PC-9 (cell line): ENCODE measurements at regions of chr12 and their contacts with region 1.

Region 1: DNA sequence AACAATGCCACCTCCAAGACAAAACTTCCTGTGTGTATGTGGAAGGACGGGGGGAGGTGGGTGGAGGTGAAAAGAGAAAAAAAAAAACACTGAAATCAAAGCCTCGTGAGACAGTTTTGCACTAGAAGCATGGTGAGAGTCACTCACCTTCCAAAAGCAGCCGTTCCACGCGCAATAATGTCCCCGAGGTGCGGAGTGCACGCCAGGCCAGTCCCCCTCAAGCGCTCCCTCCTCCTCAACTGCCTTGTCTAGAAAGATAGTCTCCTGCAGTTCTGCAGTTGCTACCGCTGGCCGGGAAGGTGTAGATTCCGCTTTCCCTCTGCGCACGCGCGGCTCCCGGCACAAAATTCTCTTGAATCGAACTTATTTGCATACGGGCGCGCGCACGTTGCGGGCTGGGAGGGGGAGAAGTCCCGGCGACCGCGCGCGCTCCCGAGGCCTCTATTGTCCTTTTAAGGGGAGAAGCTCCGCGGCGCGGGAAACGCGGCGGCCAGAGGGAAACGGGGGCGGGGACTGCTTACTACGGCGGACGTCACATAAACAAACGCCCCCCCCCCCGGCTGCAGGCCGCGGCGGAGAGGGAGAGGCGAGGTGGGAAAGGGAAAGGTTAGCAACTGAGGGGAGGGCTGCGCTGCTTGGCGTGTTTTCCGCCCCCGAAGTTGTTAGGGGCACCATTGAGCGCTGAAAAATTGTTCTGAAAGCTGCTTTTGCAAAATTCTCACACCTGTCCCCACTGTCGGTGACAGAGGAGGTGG is at the start of gene SINHCAF:
- DNase-seq: peak; percentile 97 to 100
- H3K4me3 ChIP-seq: peak within 1 kb of the TSS; percentile 91
- H3K27ac ChIP-seq: peak within 1 kb of the TSS; percentile 84
- H3K4me1 ChIP-seq: peaks cover 25% of the 10 kb centered on the region
- H3K27me3 ChIP-seq: no peaks in the 10 kb centered on the region
- CTCF ChIP-seq: no peak
- total RNA-seq, gene SINHCAF: 146 and 152 TPM in 2 replicates

Region 2: DNA sequence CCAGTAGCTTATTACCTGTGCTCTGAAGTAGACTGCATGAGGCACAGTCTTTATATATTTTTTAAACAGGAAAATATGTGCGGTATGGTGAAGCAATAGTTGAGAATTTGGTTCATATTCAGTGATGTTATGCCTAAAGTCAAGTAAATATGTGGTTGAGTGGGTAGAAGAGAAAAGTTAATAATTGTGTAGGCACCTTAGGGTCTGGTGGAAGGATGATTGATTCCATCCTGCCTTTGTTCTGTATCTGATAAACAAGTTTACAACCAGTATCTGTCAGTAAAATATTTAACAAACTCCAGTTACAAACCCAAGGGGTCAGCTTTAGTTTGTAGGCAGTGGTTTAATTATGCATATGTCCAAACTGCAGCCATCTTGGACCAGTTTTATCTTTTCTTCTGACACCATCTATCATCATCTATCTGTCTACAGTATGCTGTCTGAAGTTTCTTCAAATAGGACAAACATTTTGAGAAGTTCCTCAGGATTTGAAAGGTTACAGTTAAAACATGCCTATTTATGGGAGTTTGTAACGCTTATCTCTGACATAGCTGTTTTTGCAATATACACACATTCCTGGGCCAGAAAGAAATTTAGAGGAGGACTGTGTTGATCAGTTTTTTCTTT is 10.9 kb before region 1 on chr12:
- CTCF ChIA-PET with region 1: no interaction called
- POLR2A ChIA-PET with region 1: interaction called, 10 read pairs
- intact Hi-C with region 1: no loop called
- DNase-seq: no peak
- H3K4me3 ChIP-seq: no peak overlapping the region
- H3K27ac ChIP-seq: no peak overlapping the region
- H3K4me1 ChIP-seq: peaks cover 51% of the 10 kb centered on the region
- H3K27me3 ChIP-seq: no peaks in the 10 kb centered on the region
- CTCF ChIP-seq: no peak

Region 3: DNA sequence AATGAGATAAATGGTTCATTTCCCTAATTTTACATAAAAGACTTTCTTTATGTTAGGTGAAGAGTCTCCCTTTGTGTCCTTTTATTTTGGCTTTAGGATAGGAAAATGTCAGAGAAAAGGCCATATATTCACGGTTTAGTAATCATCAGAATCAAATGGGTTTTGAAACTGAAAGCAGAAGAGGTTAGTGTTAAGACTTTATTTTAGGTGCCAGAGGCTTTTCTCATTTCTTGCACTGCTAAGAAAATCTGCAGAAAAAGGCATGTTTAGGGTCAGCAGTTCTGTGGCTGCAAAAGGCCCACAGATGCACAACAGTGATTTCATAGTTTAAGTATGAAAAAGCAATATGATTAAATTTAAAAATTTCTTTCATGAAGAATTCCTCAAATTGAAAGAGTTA is 80.3 kb after region 1 on chr12:
- CTCF ChIA-PET with region 1: no interaction called
- POLR2A ChIA-PET with region 1: no interaction called
- intact Hi-C with region 1: loop called (anchors 1 kb)
- DNase-seq: no peak
- H3K4me3 ChIP-seq: no peak overlapping the region
- H3K27ac ChIP-seq: no peak overlapping the region
- H3K4me1 ChIP-seq: no peaks in the 10 kb centered on the region
- H3K27me3 ChIP-seq: no peaks in the 10 kb centered on the region
- CTCF ChIP-seq: no peak

Region 4: DNA sequence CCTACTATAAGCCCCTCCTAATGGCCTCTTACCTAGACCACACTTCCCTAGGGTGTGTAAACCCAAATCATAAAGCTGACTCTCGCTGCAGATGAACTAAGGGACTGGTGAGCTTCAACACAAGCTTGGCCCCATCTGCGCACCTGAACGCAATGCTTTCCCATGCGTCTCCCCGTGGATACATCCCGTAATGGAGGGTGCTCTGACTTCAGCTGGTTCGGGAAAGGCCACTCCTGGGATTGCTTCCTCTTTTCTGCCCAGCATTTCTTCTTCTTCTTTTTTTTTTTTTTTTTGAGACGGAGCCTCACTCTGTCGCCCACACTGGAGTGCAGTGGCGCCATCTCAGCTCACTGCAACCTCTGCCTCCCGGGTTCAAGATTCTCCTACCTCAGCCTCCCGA is 305.7 kb after region 1 on chr12:
- CTCF ChIA-PET with region 1: no interaction called
- POLR2A ChIA-PET with region 1: interaction called, 8 read pairs
- intact Hi-C with region 1: loop called (anchors 1 kb)
- DNase-seq: no peak
- H3K4me3 ChIP-seq: no peak overlapping the region
- H3K27ac ChIP-seq: no peak overlapping the region
- H3K4me1 ChIP-seq: no peaks in the 10 kb centered on the region
- H3K27me3 ChIP-seq: no peaks in the 10 kb centered on the region
- CTCF ChIP-seq: no peak

Region 5: GRCh38 chr12:32365473-32366064 is 1039.5 kb after region 1 on chr12:
- CTCF ChIA-PET with region 1: interaction called, 3 read pairs
- POLR2A ChIA-PET with region 1: interaction called, 11 read pairs
- intact Hi-C with region 1: no loop called
- DNase-seq: peak; percentile 70 to 72
- H3K4me3 ChIP-seq: no peak overlapping the region
- H3K27ac ChIP-seq: no peak overlapping the region
- H3K4me1 ChIP-seq: no peaks in the 10 kb centered on the region
- H3K27me3 ChIP-seq: no peaks in the 10 kb centered on the region
- CTCF ChIP-seq: peak; percentile 94